Endothelial cell of umbilical vein (primary cell): ENCODE measurements at regions of chr12 and their contacts with region 1.

Region 1: DNA sequence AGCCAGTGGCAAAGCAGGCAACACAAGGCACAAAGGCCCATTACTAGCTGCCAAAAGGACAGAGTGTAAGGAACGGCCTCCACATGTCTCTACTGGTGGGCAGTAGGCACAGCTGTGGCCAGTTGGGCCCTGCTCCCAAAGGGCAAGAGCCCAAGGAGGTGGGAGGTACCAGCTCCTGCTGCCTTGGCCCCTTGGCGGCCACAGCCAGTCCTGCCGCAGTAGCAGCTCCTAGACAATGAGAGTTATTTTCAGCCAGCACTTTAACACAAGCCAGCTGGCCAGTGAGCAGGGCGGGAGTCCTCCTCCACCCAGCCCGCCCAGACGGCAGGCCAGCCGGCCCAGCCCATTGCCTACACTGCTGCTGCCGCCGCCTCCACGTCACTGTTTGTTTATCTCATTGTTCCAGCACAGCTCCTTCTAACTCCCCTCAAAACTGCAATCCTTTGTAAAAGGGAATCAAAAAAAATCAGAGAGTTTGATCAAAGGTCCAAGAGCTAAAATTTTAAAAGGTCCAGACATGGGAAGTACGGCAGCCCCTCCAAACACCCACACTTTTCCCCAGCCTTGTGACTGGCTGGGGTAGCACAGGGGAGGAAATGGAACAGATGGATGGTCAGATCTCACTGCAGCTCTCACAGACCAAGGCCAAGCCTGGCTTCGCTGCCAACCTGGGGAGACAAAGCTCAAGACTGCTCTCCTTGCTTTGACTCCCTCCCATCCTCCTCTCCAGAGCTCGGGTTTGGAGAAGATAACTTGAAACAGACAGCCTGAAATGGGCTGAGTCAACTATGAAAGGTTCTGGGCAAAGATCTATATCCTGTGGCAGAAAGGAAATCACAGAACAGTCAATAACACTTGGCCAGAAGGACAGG is 33.5 kb downstream of the FMNL3 start:
- DNase-seq: peak; percentile 98
- H3K4me3 ChIP-seq: no peak overlapping the region
- H3K27ac ChIP-seq: peak overlapping the region; percentile 91
- H3K4me1 ChIP-seq: peaks cover 45% of the 10 kb centered on the region
- H3K27me3 ChIP-seq: no peaks in the 10 kb centered on the region
- CTCF ChIP-seq: peak; percentile 21 to 49
- POLR2A ChIP-seq: no peak

Region 2: DNA sequence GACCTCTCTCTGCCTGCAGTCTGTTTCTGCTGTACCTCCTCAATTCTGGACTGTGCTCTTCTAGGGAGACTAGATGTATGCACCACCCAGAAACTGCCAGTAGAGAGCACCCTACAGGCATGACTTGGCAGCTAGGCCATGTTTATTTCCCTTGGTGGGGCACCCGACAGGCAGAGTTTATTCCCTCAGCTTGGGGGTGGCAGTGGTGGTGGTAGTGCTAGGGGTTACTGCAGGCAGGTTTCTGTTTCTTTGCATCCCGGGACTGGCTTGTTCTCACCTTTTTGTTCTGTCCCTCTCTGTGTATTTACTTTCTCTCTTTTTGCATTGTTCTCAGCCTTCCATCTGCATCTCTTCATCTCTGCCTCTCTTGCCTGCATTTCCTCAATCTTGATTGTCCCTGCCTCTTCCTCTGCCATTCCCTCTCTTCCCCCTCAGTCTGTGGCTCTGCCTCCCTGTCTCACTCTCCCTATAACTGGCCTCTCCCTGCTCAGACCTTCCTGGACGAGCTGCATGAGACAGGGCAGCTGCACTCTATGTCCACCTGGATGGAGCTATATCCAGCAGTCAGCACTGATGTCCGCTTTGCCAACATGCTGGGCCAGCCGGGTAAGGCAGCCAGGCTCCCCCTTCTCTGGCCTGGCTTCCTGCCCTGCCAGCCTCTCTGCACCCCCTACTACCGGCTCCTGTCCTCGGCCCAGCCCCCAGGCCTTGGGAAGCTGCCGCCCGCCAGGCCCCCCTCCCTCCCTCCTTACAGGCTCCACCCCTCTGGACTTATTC is 36.5 kb before region 1 on chr12:
- CTCF ChIA-PET with region 1: interaction called, 30 read pairs
- POLR2A ChIA-PET with region 1: interaction called, 3 read pairs
- dilution Hi-C with region 1: no loop called
- intact Hi-C with region 1: no loop called
- DNase-seq: peak; percentile 76
- H3K4me3 ChIP-seq: no peak overlapping the region
- H3K27ac ChIP-seq: peak overlapping the region; percentile 48
- H3K4me1 ChIP-seq: peaks cover 12% of the 10 kb centered on the region
- H3K27me3 ChIP-seq: no peaks in the 10 kb centered on the region
- CTCF ChIP-seq: peak; percentile 73 to 76
- POLR2A ChIP-seq: no peak

Region 3: DNA sequence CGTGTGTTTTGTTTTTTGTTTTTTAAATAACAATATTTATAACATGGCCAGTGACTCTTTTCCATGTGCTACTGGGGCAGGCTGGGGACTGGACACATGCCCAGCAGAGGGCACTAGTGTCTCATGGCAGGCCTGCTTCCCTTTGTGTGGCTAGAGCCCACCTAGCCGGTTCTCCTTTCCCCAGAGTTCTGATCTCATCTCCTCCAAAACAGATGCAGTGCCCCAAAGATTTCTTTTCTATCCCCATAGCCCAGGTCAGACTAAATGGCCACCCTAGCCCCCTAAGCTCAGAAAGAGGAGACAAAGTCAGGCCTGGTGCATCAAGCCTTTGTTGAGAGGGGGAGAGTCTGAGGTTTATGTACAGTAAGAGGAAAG is 29.1 kb before region 1 on chr12:
- CTCF ChIA-PET with region 1: interaction called, 32 read pairs
- POLR2A ChIA-PET with region 1: interaction called, 10 read pairs
- dilution Hi-C with region 1: no loop called
- intact Hi-C with region 1: loop called (anchors 1 kb)
- DNase-seq: peak; percentile 69
- H3K4me3 ChIP-seq: no peak overlapping the region
- H3K27ac ChIP-seq: peak overlapping the region; percentile 26
- H3K4me1 ChIP-seq: peaks cover 31% of the 10 kb centered on the region
- H3K27me3 ChIP-seq: no peaks in the 10 kb centered on the region
- CTCF ChIP-seq: peak; percentile 91 to 92
- POLR2A ChIP-seq: no peak

Region 4: GRCh38 chr12:49662998-49663843 is 10.5 kb before region 1 on chr12:
- CTCF ChIA-PET with region 1: interaction called, 56 read pairs
- POLR2A ChIA-PET with region 1: interaction called, 21 read pairs
- dilution Hi-C with region 1: no loop called
- intact Hi-C with region 1: loop called (anchors 1 kb)
- DNase-seq: peak; percentile 95
- H3K4me3 ChIP-seq: peak overlapping the region in 1 of 3 experiments; percentile 12
- H3K27ac ChIP-seq: peak overlapping the region; percentile 100
- H3K4me1 ChIP-seq: peaks cover 48% of the 10 kb centered on the region
- H3K27me3 ChIP-seq: no peaks in the 10 kb centered on the region
- CTCF ChIP-seq: no peak
- POLR2A ChIP-seq: no peak

Region 5: DNA sequence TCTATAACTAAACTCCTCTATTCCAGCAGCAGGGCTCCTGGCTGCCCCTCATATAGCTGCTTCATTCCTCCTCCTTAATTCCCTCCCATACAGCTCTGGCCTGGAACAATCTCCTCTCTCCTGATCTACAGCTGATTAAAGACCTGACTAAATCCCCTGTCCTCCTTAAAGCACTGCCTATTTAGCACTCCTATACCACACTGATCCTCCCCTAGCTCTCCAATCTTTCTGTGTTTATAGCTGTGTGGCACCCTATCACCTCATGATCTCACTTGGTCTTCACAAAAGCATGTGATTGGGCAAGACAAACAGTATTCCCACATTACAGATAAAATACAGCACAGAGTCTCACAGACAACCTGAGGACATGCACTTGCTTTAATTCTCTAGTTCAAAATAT is 16.1 kb after region 1 on chr12:
- CTCF ChIA-PET with region 1: interaction called, 19 read pairs
- POLR2A ChIA-PET with region 1: no interaction called
- dilution Hi-C with region 1: no loop called
- intact Hi-C with region 1: no loop called
- DNase-seq: no peak
- H3K4me3 ChIP-seq: no peak overlapping the region
- H3K27ac ChIP-seq: no peak overlapping the region
- H3K4me1 ChIP-seq: no peaks in the 10 kb centered on the region
- H3K27me3 ChIP-seq: no peaks in the 10 kb centered on the region
- CTCF ChIP-seq: no peak
- POLR2A ChIP-seq: no peak

Region 6: GRCh38 chr12:49698619-49699545 is 25.2 kb after region 1 on chr12:
- CTCF ChIA-PET with region 1: interaction called, 10 read pairs
- POLR2A ChIA-PET with region 1: interaction called, 4 read pairs
- dilution Hi-C with region 1: no loop called
- intact Hi-C with region 1: loop called (anchors 1 kb)
- DNase-seq: peak; percentile 83
- H3K4me3 ChIP-seq: peak overlapping the region in 1 of 3 experiments; percentile 41
- H3K27ac ChIP-seq: peak overlapping the region; percentile 81
- H3K4me1 ChIP-seq: peaks cover 34% of the 10 kb centered on the region
- H3K27me3 ChIP-seq: no peaks in the 10 kb centered on the region
- CTCF ChIP-seq: no peak
- POLR2A ChIP-seq: no peak

Region 7: GRCh38 chr12:49707128-49707811 is 33.6 kb after region 1 on chr12 and contains the start of gene FMNL3:
- CTCF ChIA-PET with region 1: interaction called, 23 read pairs
- POLR2A ChIA-PET with region 1: interaction called, 6 read pairs
- dilution Hi-C with region 1: no loop called
- intact Hi-C with region 1: loop called (anchors 1 kb)
- DNase-seq: peak; percentile 97
- H3K4me3 ChIP-seq: peak within 1 kb of the TSS; percentile 88 to 96 (median 93)
- H3K27ac ChIP-seq: peak within 1 kb of the TSS; percentile 85
- H3K4me1 ChIP-seq: peaks cover 36% of the 10 kb centered on the region
- H3K27me3 ChIP-seq: peaks cover 18 to 21% of the 10 kb centered on the region in 2 experiments
- CTCF ChIP-seq: peak; percentile 90 to 93
- POLR2A ChIP-seq: peak; percentile 23
- total RNA-seq, gene FMNL3: 93.2 and 93.3 TPM in 2 replicates

Region 8: DNA sequence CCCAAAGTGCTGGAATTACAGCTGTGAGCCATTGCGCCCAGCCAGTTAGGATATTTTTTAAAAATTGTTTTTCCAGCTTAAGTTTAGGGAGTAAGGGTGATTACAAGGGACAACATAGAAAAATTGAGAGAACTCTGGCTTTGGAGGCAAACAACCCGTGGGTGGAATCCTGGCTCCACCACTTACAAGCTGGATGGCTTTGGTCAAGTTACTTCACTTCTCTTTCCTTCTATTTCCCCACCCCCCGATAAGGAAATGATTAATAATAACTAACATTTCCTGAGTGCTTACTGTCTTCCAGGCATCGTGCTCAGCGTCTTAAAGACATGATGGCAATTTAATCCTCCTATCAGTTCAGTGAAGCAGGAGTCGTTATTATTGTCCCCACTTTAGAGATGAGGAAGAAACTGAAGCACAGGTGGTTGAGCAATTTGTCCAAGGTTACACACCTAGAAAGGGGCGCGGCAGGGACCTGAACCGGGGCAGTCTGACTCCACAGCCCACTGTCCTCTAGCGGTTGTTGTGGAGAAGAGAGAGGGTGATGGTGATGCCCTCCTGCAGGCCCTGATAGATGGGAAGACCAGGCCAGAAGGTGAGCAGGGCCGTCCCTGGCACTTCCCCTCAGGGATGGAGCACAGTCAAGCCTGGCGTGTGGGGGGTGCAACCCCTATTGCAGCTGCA is 246.7 kb after region 1 on chr12:
- CTCF ChIA-PET with region 1: no interaction called
- POLR2A ChIA-PET with region 1: no interaction called
- dilution Hi-C with region 1: no loop called
- intact Hi-C with region 1: no loop called
- DNase-seq: peak; percentile 65
- H3K4me3 ChIP-seq: no peak overlapping the region
- H3K27ac ChIP-seq: peak overlapping the region; percentile 2
- H3K4me1 ChIP-seq: peaks cover 16% of the 10 kb centered on the region
- H3K27me3 ChIP-seq: no peaks in the 10 kb centered on the region
- CTCF ChIP-seq: peak in 1 of 2 donors; percentile 9
- POLR2A ChIP-seq: no peak